ENCODE measurements at regions of chr4 and their contacts with region 1.

Region 1: GRCh38 chr4:38856524-38857337 is at the start of gene TLR6:
- DNase-seq: peak; percentile 91
- ATAC-seq: peak; percentile 59
- H3K4me3 ChIP-seq: peak within 1 kb of the TSS; percentile 75
- H3K27ac ChIP-seq: peak within 1 kb of the TSS; percentile 96
- H3K4me1 ChIP-seq: peaks cover 14% of the 10 kb centered on the region
- H3K27me3 ChIP-seq: no peaks in the 10 kb centered on the region
- CTCF ChIP-seq: peak; percentile 62 to 79 (median 77)
- EP300 ChIP-seq: peak in 1 of 2 experiments; percentile 51; a peak in 1 of 4 replicates
- POLR2A ChIP-seq: no peak
- RAD21 ChIP-seq: peak; percentile 88
- polyA plus RNA-seq, gene TLR6: 1.1 to 1.5 TPM

Region 2: GRCh38 chr4:38062088-38062893 is 794.4 kb before region 1 on chr4:
- CTCF ChIA-PET with region 1: no interaction called
- POLR2A ChIA-PET with region 1: no interaction called
- RAD21 ChIA-PET with region 1: no interaction called
- SMC1A ChIA-PET with region 1: no interaction called
- in situ Hi-C with region 1: loop called (anchors 10 kb)
- intact Hi-C with region 1: loop called (anchors 2 kb)
- DNase-seq: no peak
- ATAC-seq: peak; percentile 93
- H3K4me3 ChIP-seq: no peak overlapping the region
- H3K27ac ChIP-seq: peak overlapping the region; percentile 6
- H3K4me1 ChIP-seq: peaks cover 3% of the 10 kb centered on the region; the same call in 1 of the 2 replicates
- H3K27me3 ChIP-seq: no peaks in the 10 kb centered on the region
- CTCF ChIP-seq: peak; percentile 67 to 85 (median 80)
- EP300 ChIP-seq: no peak
- POLR2A ChIP-seq: no peak
- RAD21 ChIP-seq: peak; percentile 95

Region 3: DNA sequence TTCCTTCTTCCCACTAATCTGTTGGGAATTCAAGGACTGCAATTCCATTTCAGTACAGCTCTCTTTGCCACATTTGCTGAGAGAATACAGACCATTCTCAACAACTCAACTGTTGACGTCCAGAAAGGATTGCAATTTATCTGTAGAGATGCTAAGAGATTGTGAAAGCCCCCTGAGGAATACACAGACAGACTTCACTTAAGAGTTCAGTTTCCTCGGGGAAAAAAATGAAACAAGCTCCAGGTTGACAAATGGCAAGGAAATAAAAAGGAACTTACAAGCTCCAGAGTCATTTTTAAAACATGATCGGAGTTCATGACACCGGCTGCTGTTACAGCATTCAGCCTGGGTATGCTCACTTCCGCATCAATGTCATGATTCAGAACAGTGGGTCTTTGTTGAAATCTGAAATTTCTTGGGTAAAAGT is 87.8 kb before region 1 on chr4:
- CTCF ChIA-PET with region 1: interaction called, 172 read pairs
- POLR2A ChIA-PET with region 1: no interaction called
- RAD21 ChIA-PET with region 1: interaction called, 3 read pairs
- SMC1A ChIA-PET with region 1: interaction called, 9 read pairs
- in situ Hi-C with region 1: loop called (anchors 5 kb)
- intact Hi-C with region 1: no loop called
- DNase-seq: no peak
- ATAC-seq: peak; percentile 67
- H3K4me3 ChIP-seq: no peak overlapping the region
- H3K27ac ChIP-seq: peak overlapping the region; percentile 56
- H3K4me1 ChIP-seq: peaks cover 16% of the 10 kb centered on the region
- H3K27me3 ChIP-seq: no peaks in the 10 kb centered on the region
- CTCF ChIP-seq: no peak
- EP300 ChIP-seq: no peak
- POLR2A ChIP-seq: no peak
- RAD21 ChIP-seq: no peak

Region 4: DNA sequence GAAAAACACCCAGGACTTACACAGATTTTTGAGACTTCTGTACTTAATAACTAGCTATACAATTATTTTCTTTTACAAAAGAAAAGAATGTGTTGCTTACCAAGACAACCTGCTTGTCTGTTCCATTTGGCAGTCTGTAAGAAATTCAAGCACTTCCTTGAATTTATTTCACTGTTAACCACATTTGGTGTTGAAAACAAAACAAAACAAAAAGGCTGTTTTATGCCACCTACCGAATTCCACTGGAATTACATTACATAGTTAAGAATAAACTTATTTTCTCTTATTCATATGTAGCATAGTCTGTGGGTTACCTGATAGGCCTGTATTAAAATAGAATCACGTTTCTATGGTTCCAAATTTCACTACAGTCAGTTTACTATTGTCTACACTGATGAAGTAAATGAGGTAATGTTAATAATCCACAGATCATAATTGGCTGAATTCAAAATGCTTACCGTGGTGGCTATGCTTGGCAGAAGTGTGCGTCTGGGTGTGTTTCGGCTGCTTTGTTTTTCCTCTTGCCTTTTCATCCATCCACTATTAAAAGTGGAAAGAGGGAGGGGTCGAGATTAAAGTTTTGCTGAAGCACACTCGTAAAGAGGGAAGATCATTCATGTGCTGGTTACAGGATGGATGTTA is 52.0 kb before region 1 on chr4 and contains the start of gene TLR1:
- CTCF ChIA-PET with region 1: interaction called, 64 read pairs
- POLR2A ChIA-PET with region 1: interaction called, 25 read pairs
- RAD21 ChIA-PET with region 1: interaction called, 53 read pairs
- SMC1A ChIA-PET with region 1: interaction called, 84 read pairs
- in situ Hi-C with region 1: no loop called
- intact Hi-C with region 1: loop called (anchors 1 kb)
- DNase-seq: peak; percentile 62
- ATAC-seq: peak; percentile 67
- H3K4me3 ChIP-seq: peak within 1 kb of the TSS; percentile 41
- H3K27ac ChIP-seq: peak within 1 kb of the TSS; percentile 86
- H3K4me1 ChIP-seq: peaks cover 20% of the 10 kb centered on the region
- H3K27me3 ChIP-seq: no peaks in the 10 kb centered on the region
- CTCF ChIP-seq: peak; percentile 22 to 47 (median 38); a peak in 5 of 6 replicates
- EP300 ChIP-seq: no peak
- POLR2A ChIP-seq: no peak
- RAD21 ChIP-seq: peak; percentile 64
- polyA plus RNA-seq, gene TLR1: 9.3 to 9.5 TPM

Region 5: GRCh38 chr4:38842994-38843393 is 13.7 kb before region 1 on chr4:
- CTCF ChIA-PET with region 1: interaction called, 5 read pairs
- POLR2A ChIA-PET with region 1: interaction called, 3 read pairs
- RAD21 ChIA-PET with region 1: no interaction called
- SMC1A ChIA-PET with region 1: interaction called, 10 read pairs
- in situ Hi-C with region 1: no loop called
- intact Hi-C with region 1: no loop called
- DNase-seq: no peak
- ATAC-seq: no peak
- H3K4me3 ChIP-seq: no peak overlapping the region
- H3K27ac ChIP-seq: no peak overlapping the region
- H3K4me1 ChIP-seq: no peaks in the 10 kb centered on the region
- H3K27me3 ChIP-seq: no peaks in the 10 kb centered on the region
- CTCF ChIP-seq: no peak
- EP300 ChIP-seq: no peak
- POLR2A ChIP-seq: no peak
- RAD21 ChIP-seq: no peak

Region 6: DNA sequence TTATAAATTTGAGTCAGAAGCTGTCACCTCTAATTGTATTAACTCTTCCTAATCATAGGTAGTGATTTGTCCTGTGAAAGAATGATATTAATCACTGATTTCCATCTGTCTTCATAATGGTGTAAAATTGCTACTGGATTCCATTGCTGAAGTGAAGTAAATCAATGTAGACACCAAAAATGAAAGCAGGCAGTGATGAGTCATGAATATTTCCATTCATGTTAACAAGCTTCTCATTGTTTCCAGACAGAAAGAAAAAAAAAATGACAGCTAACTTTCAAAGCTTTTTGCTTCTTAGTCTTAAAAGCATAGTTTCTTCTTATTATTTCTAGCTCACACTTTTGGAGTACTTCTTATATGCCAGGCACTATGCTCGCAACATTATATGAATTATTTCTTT is 32.4 kb after region 1 on chr4:
- CTCF ChIA-PET with region 1: interaction called, 100 read pairs
- POLR2A ChIA-PET with region 1: interaction called, 5 read pairs
- RAD21 ChIA-PET with region 1: interaction called, 14 read pairs
- SMC1A ChIA-PET with region 1: interaction called, 38 read pairs
- in situ Hi-C with region 1: no loop called
- intact Hi-C with region 1: loop called (anchors 2 kb)
- DNase-seq: peak; percentile 58
- ATAC-seq: peak; percentile 85
- H3K4me3 ChIP-seq: no peak overlapping the region
- H3K27ac ChIP-seq: peak overlapping the region; percentile 64; the same call in 1 of the 2 replicates
- H3K4me1 ChIP-seq: peaks cover 4% of the 10 kb centered on the region
- H3K27me3 ChIP-seq: no peaks in the 10 kb centered on the region
- CTCF ChIP-seq: no peak
- EP300 ChIP-seq: peak; percentile 68 to 86; a peak in 3 of 4 replicates
- POLR2A ChIP-seq: no peak
- RAD21 ChIP-seq: no peak

Region 7: DNA sequence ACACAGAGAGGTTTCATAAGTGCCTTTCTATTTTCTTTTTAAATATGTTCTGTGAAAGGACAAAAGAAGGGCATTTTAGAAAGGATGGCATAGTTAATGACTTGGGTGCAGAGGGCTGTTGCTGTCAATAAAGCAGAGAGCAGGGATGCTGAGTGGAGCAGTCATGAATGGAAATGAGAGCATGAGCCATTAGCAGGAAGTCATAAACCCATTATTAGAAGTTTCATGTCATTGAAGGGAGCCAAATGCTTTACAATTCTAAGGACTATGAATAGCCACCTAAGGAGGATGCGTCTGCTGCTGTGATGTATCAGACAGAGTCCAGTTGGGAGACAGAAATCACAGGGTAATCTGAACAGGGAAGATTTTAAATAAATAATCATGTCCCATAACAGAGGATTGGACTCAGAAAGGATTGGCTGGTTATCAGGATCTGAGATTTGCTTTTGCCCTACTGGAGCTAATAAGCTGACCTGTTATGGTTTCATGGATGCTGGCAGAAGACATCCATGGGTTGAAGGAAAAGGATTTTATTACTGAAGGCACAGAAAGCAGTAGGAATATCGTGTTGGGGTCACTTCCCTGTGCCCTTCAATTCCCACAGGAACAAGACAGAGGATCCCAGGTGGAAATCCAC is 278.1 kb after region 1 on chr4:
- CTCF ChIA-PET with region 1: interaction called, 37 read pairs
- POLR2A ChIA-PET with region 1: interaction called, 3 read pairs
- RAD21 ChIA-PET with region 1: interaction called, 5 read pairs
- SMC1A ChIA-PET with region 1: interaction called, 9 read pairs
- in situ Hi-C with region 1: no loop called
- intact Hi-C with region 1: no loop called
- DNase-seq: no peak
- ATAC-seq: peak; percentile 70
- H3K4me3 ChIP-seq: no peak overlapping the region
- H3K27ac ChIP-seq: peak overlapping the region; percentile 27; the same call in 1 of the 2 replicates
- H3K4me1 ChIP-seq: peaks cover 6% of the 10 kb centered on the region
- H3K27me3 ChIP-seq: no peaks in the 10 kb centered on the region
- CTCF ChIP-seq: no peak
- EP300 ChIP-seq: no peak
- POLR2A ChIP-seq: no peak
- RAD21 ChIP-seq: no peak

Measured in GM12878 (cell line).